Activated CD4-positive, alpha-beta T cell treated with anti-CD3 and anti-CD28 coated beads for 36 hours (primary cell): ENCODE measurements at regions of chr2 and their contacts with region 1.

Region 1: DNA sequence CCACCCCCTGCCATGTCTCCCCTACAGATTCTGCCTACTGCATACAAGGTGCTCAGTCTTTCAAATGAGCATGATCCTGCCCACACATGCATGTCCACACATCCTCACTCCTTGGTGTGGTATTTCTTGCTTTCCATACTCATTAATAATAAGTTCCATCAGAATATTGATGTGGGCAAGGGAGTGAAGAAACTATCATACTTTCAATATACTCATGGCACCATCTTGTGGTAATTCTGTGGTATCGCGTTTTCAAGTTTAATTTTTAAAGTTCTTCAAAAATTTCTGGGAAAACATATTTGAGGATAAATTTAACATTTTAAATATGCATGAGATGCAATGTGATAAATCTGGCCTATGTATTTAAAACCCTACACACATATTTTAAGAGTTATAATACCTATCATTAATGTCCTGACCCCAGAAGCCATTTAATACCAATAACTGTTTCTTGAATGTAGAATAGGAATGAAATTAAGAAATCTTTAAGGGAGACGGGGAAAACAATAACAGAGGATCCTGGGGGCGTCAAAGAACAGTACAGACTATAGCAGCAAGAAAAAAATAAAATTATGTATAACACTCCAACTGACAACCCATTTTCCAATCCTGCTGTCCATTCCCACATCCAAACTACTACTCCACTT is 110.1 kb downstream of the ZNF385B start:
- DNase-seq: no peak
- ATAC-seq: no peak
- H3K4me3 Mint-ChIP-seq: no peak overlapping the region
- H3K27ac Mint-ChIP-seq: no peak overlapping the region
- H3K4me1 Mint-ChIP-seq: no peaks in the 10 kb centered on the region
- H3K27me3 Mint-ChIP-seq: peaks cover 4% of the 10 kb centered on the region

Region 2: GRCh38 chr2:178761759-178762371 is 989.4 kb before region 1 on chr2:
- CTCF ChIA-PET with region 1: no interaction called
- POLR2A ChIA-PET with region 1: no interaction called
- intact Hi-C with region 1: loop called in 1 of 2 experiments (anchors 1 kb)
- DNase-seq: peak; percentile 44
- ATAC-seq: peak; percentile 66
- H3K4me3 Mint-ChIP-seq: no peak overlapping the region
- H3K27ac Mint-ChIP-seq: no peak overlapping the region
- H3K4me1 Mint-ChIP-seq: no peaks in the 10 kb centered on the region
- H3K27me3 Mint-ChIP-seq: no peaks in the 10 kb centered on the region

Region 3: GRCh38 chr2:178796079-178796677 is 955.1 kb before region 1 on chr2:
- CTCF ChIA-PET with region 1: interaction called, 3 read pairs
- POLR2A ChIA-PET with region 1: no interaction called
- intact Hi-C with region 1: loop called in 1 of 2 experiments (anchors 1 kb)
- DNase-seq: no peak
- ATAC-seq: no peak
- H3K4me3 Mint-ChIP-seq: no peak overlapping the region
- H3K27ac Mint-ChIP-seq: no peak overlapping the region
- H3K4me1 Mint-ChIP-seq: no peaks in the 10 kb centered on the region
- H3K27me3 Mint-ChIP-seq: no peaks in the 10 kb centered on the region

Region 4: DNA sequence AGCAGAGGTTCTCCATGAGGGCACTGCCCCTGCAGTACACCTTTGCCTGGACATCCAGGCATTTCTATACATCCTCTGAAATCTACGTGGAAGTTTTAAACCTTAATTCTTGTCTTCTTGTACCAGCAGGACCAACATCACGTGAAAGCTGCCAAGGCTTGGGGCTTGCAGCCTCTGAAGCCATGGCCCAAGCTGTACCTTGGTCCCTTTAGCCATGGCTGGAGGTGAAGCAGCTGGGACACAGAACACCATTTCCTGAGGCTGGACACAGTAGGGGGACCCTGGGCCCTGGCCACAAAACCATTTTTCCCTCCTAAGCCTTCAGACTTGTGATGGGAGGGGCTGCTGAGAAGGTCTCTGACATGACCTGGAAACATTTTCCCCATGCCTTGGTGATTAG is 668.6 kb before region 1 on chr2:
- CTCF ChIA-PET with region 1: no interaction called
- POLR2A ChIA-PET with region 1: no interaction called
- intact Hi-C with region 1: no loop called
- DNase-seq: no peak
- ATAC-seq: no peak
- H3K4me3 Mint-ChIP-seq: no peak overlapping the region
- H3K27ac Mint-ChIP-seq: no peak overlapping the region
- H3K4me1 Mint-ChIP-seq: no peaks in the 10 kb centered on the region
- H3K27me3 Mint-ChIP-seq: no peaks in the 10 kb centered on the region

Region 5: DNA sequence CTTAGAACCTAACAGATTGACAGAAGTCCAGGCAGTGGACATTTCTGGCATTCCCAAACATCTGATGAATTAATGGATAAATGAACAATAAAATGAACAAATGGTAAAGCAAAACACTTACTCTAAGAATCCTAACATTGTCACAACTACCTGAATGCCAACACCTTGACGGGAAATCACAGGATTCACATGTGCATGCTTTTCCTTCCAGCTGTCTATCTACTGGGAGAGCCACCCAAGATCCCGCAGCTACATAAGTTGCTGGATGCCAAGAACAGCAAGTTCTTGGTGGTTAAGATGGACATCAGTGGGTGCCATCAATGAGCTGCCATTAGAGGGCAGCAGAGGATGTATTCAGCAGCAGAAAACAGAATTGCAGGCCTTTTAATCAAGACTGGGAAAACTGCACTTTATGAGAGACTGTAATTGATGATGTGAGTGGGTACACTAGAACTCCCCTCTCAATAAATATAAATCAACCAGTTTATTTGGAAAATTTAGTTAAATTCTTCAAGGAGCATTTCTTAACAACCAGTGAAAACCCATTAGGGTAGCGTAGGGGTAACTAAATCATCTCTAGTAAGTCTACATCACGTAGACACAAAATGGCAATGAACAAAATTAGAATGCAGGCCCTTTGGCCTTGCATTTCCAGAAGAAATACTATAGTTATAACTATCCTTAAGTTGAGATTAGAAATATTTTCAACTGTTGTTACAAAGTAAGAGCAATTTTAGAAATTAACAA is 532.3 kb before region 1 on chr2:
- CTCF ChIA-PET with region 1: no interaction called
- POLR2A ChIA-PET with region 1: no interaction called
- intact Hi-C with region 1: loop called (anchors 1 to 2 kb)
- DNase-seq: peak; percentile 72
- ATAC-seq: peak; percentile 69
- H3K4me3 Mint-ChIP-seq: no peak overlapping the region
- H3K27ac Mint-ChIP-seq: no peak overlapping the region
- H3K4me1 Mint-ChIP-seq: no peaks in the 10 kb centered on the region
- H3K27me3 Mint-ChIP-seq: no peaks in the 10 kb centered on the region

Region 6: DNA sequence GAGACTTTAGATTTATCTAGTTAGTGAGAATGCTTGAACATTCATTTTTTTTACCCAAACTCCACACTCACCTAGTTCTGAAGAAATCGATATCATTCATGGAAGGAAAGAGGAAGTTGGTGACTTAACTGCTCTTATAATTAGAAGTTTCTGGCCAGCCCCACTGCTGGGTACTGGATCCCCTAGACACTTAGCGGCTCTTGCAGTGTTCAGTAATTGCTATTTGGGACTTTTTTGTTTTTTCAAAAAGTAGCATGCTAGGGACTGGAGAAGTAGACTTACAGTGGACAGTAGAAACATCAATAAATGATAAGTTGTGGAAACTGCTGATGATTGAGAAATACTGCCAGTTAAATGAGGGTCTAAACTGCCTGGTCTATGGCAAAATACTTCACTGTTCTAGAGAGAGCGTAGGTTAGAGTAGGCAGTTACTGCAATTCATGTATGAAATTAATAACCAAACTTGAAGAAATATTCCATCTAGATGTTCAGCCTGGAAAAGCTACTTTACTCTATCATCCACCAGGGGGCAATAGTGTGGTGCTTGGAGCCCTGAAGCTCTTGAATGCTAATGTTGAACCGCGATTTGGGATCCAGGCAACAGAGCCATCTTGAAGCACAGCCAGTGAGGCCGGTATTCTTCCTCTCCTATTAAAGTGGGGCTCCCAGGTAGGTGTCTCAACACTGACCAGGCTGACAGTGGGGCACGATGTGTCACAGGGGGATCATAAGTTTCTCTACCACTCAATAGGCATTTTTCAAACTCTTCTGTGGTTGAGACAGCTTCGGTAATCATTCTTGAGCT is 340.5 kb before region 1 on chr2:
- CTCF ChIA-PET with region 1: interaction called, 3 read pairs
- POLR2A ChIA-PET with region 1: no interaction called
- intact Hi-C with region 1: loop called (anchors 2 kb)
- DNase-seq: peak; percentile 43
- ATAC-seq: peak; percentile 47
- H3K4me3 Mint-ChIP-seq: no peak overlapping the region
- H3K27ac Mint-ChIP-seq: no peak overlapping the region
- H3K4me1 Mint-ChIP-seq: no peaks in the 10 kb centered on the region
- H3K27me3 Mint-ChIP-seq: peaks cover 26% of the 10 kb centered on the region

Region 7: DNA sequence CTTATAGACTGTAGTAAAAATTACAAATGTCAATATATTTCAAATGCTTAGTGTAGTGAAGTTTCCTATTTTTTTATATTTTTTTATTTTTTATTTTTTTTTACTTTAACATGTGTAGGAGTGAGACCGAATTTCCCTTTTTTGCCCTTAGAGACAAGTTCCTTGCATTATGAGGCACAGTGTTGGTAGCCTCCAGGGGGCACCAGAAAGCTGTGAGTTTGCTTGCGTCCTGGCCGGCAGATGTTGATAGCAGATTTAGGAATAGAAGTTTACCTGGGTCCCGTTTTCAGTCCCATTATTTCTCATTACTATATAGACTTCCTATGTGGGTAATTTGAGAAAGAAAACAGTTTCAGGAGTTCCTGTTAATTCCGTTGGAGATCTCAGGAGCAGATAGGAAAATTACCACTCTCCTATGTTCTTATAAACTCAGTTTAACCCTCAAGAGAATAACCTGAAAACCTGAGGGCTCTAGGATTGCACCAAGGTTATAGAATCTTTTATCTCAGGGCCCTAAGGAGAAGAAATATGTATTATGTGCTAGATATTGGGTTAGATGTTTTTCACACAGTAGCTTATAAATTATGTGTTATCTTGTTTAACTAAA is 329.1 kb before region 1 on chr2:
- CTCF ChIA-PET with region 1: no interaction called
- POLR2A ChIA-PET with region 1: no interaction called
- intact Hi-C with region 1: loop called in 1 of 2 experiments (anchors 1 kb)
- DNase-seq: peak; percentile 77
- ATAC-seq: peak; percentile 60
- H3K4me3 Mint-ChIP-seq: no peak overlapping the region
- H3K27ac Mint-ChIP-seq: no peak overlapping the region
- H3K4me1 Mint-ChIP-seq: no peaks in the 10 kb centered on the region
- H3K27me3 Mint-ChIP-seq: peaks cover 7% of the 10 kb centered on the region

Region 8: GRCh38 chr2:179825494-179825893 is 74.2 kb after region 1 on chr2:
- CTCF ChIA-PET with region 1: no interaction called
- POLR2A ChIA-PET with region 1: no interaction called
- intact Hi-C with region 1: no loop called
- DNase-seq: no peak
- ATAC-seq: no peak
- H3K4me3 Mint-ChIP-seq: no peak overlapping the region
- H3K27ac Mint-ChIP-seq: no peak overlapping the region
- H3K4me1 Mint-ChIP-seq: no peaks in the 10 kb centered on the region
- H3K27me3 Mint-ChIP-seq: peaks cover 7% of the 10 kb centered on the region